Lower leg skin (tissue), 4 donors: ENCODE measurements at regions of chr17 and their contacts with region 1.

Region 1: DNA sequence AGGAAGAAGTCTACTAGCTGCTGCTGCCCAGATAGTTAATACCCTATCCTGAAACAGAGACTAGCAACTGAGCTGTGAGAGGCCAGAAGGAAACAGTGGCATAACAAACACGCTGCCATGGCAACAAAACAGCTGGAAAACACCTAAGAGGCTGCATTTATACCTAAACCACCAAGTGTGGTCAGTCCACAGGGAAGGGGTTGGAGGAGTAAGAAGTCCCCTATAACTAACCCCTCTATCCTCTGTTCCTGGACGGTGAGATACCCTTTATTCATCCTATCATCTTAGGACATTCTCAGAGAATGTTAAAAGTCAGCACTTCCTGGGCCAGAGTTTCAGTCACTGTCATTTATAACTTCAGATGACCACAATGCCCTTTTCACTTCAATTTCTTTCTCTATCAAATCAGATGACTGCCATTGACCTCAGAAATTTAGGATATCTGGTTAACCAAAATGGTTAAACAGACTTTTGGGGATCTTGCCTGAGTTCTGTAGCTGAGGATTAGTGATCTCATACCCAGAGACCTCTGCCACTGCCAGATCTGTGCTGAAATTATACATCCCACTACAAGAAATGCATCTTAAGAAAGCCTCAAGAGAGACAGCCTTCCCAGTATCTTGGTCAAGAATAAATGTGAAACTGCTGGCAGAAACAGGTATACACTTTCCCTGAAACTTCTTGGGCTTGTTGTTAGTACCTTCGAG is 36.2 kb downstream of the STH start:
- DNase-seq: no peak
- H3K4me3 ChIP-seq: no peak overlapping the region
- CTCF ChIP-seq: no peak
- POLR2A ChIP-seq: no peak

Region 2: DNA sequence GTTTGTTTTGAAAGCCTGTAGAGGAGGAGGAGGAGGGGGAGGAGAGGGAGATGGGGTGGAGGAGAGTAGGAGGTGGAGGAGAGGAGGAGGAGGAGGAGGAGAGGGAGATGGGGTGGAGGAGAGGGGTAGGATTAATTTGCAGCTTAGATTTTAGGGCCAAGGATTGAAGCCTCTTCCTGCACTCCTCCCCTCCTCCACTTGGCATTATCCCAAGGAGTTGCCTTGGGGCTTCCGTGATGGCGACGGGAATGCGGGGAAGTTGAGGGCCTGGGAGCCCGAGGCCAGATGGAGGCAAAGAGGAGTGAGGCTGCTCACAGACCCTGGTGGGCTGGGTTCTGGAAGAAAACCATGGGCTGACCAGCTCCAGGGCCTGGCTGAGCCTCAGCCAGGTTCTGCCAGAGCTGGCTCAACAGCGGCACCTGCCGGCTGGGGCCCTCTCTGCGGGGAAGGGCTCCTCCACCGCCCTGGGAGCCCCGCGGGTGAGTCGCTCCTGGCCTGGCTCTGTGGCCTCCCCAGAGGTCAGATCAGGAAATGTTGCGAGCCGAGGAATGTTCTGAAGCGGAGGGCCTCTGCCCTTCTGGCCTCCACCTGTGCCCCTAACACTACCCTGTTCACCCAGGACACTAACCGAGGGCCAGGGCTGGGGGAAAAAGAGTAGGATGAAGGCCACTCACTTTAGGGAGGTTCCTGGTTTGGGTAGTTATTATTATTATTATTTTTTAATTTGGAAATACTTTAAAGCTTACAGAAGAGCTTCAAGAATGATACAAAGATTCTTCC is 837.5 kb before region 1 on chr17:
- intact Hi-C with region 1: no loop called
- DNase-seq: peak; percentile 80 to 98
- H3K4me3 ChIP-seq: no peak overlapping the region
- CTCF ChIP-seq: peak in 2 of 3 donors; percentile 32 to 97
- POLR2A ChIP-seq: no peak

Region 3: GRCh38 chr17:46097497-46097896 is 62.2 kb after region 1 on chr17:
- intact Hi-C with region 1: no loop called
- DNase-seq: no peak
- H3K4me3 ChIP-seq: no peak overlapping the region
- CTCF ChIP-seq: no peak
- POLR2A ChIP-seq: no peak

Region 4: DNA sequence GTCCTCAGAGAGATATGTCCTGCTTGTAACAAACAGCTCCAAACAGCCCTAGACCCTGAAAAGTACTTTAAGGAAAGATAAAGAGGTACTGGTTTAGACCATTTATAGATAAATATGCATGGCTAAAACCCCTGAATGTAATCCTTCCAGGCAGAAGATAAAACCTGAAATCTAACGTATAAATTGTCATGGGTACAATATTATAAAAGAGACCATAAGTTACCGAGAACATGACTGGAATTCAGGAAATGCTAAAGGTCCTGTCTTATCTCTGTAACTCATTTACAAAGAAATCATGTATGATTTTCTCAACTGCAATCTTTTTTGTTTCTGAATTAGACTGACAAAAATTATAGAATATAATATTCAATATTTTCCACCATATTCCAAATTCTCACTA is 167.2 kb after region 1 on chr17:
- intact Hi-C with region 1: loop called (anchors 10 kb)
- DNase-seq: no peak
- H3K4me3 ChIP-seq: no peak overlapping the region
- CTCF ChIP-seq: no peak
- POLR2A ChIP-seq: no peak